Colonic mucosa (tissue), 4 donors: ENCODE measurements at regions of chr12 and their contacts with region 1.

Region 1: GRCh38 chr12:50074936-50075807 is 10.0 kb upstream of the SMARCD1 start:
- DNase-seq: peak; percentile 90
- H3K4me3 ChIP-seq: no peak overlapping the region
- H3K27ac ChIP-seq: no peak overlapping the region
- H3K4me1 ChIP-seq: no peaks in the 10 kb centered on the region
- H3K27me3 ChIP-seq: no peaks in the 10 kb centered on the region
- CTCF ChIP-seq: peak; percentile 84

Region 2: GRCh38 chr12:50006789-50007436 is 68.3 kb before region 1 on chr12:
- intact Hi-C with region 1: no loop called
- DNase-seq: no peak
- H3K4me3 ChIP-seq: no peak overlapping the region
- H3K27ac ChIP-seq: no peak overlapping the region
- H3K4me1 ChIP-seq: no peaks in the 10 kb centered on the region
- H3K27me3 ChIP-seq: no peaks in the 10 kb centered on the region
- CTCF ChIP-seq: no peak

Region 3: GRCh38 chr12:50038336-50038735 is 36.8 kb before region 1 on chr12:
- intact Hi-C with region 1: loop called (anchors 5 kb)
- DNase-seq: no peak
- H3K4me3 ChIP-seq: no peak overlapping the region
- H3K27ac ChIP-seq: no peak overlapping the region
- H3K4me1 ChIP-seq: no peaks in the 10 kb centered on the region
- H3K27me3 ChIP-seq: no peaks in the 10 kb centered on the region
- CTCF ChIP-seq: no peak

Region 4: DNA sequence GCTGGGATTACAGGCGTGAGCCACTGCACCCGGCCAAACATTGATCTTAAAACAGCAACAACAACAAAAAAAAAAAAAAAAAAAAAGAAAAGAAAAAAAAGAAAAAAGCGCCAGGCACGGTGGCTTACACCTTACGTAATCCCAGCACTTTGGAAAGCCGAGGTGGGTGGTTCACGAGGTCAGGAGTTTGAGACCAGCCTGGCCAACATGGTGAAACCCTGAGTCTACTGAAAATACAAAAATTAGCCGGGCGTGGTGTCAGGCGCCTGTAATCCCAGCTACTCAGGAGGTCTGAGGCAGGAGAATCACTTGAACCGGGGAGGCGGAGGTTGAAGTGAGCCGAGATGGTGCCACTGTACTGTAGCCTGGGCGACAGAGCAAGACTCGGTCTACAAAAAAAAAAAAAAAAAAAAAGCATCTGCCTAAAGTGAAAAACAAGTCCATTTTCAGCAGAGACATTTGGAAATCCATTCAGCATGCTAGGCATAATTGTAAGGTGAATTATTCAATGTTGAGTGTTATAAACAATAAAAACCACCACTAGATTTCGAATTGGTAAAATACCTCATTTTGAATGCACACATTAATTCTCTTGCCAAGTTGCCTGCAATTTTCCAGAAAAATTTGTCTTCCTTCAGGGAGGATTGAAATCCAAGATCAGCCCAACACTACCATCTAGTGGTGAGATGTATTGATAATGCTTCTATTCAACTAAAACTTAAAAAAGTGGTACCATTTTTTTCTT is 100.0 kb after region 1 on chr12:
- intact Hi-C with region 1: loop called (anchors 5 kb)
- DNase-seq: no peak
- H3K4me3 ChIP-seq: no peak overlapping the region
- H3K27ac ChIP-seq: no peak overlapping the region
- H3K4me1 ChIP-seq: no peaks in the 10 kb centered on the region
- H3K27me3 ChIP-seq: no peaks in the 10 kb centered on the region
- CTCF ChIP-seq: peak; percentile 47